Esophagus muscularis mucosa (tissue), 4 donors: ENCODE measurements at regions of chr6 and their contacts with region 1.

Region 1: GRCh38 chr6:133568970-133569889 is 319.7 kb upstream of the TCF21 start:
- DNase-seq: no peak
- H3K4me3 ChIP-seq: peak overlapping the region; percentile 44 to 59 (median 49)
- H3K27ac ChIP-seq: peak overlapping the region; percentile 30 to 72 (median 66)
- H3K4me1 ChIP-seq: peaks cover 0 to 11% (median 3%) of the 10 kb centered on the region in 4 donors
- H3K27me3 ChIP-seq: no peaks in the 10 kb centered on the region
- CTCF ChIP-seq: peak; percentile 96 to 99 (median 97)
- EP300 ChIP-seq: no peak
- POLR2A ChIP-seq: no peak

Region 2: DNA sequence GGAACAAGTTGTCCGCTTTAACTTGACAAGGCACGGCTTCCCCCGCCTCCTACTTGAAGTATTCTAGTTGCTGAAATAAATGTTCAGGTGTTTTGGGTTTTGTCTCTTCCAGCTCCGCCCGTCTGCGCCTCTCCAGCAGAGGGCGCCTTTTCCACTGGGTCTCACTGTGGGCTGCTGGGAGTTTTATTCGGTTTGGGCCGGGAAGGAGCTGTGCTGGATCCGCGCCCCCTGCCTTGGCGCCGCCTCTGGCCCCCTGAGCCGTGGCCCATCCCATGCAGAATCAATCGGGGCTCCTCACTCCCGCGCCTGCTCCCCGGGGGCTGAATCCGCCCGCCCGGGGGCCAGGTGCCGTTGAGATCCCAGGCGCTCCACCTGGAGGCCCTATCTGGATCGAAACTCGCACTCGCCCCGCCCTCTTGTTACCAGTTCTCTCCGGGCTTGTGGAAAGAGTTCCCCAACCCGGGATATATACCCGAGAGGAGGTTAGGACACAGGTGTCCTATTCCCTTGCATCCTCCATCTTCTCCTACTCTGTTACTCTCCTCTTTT is 268.6 kb after region 1 on chr6:
- intact Hi-C with region 1: loop called (anchors 5 kb)
- DNase-seq: no peak
- H3K4me3 ChIP-seq: peak overlapping the region; percentile 50 to 59 (median 52)
- H3K27ac ChIP-seq: peak overlapping the region in 1 of 4 donors; percentile 48
- H3K4me1 ChIP-seq: peaks cover 0 to 10% (median 4%) of the 10 kb centered on the region in 4 donors
- H3K27me3 ChIP-seq: no peaks in the 10 kb centered on the region
- CTCF ChIP-seq: peak; percentile 56 to 81 (median 77)
- EP300 ChIP-seq: no peak
- POLR2A ChIP-seq: no peak

Region 3: DNA sequence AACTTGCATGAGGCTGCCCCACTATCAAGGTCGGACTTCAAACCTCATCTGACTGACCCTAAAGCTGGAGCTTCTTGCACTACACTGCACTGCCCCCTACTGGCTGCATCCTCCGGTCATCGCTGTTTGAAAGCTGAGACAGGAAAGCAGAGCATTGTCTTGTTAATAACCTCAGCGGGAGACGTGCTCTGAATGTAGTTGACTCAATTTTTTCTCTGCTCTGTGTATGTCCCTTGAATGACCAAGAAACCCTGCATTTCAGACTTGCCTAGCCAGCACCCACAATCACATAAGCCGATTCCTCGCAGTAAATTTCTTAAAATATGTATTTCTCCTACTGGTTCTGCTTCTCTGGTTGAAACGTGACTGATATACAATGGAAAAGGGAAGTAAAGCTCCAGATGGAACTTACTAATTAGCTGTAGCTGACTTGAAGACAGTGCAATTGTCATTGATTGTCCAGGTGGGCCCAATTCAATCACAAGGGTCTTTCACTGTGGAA is 347.5 kb after region 1 on chr6:
- intact Hi-C with region 1: loop called (anchors 1 kb)
- DNase-seq: peak; percentile 97
- H3K4me3 ChIP-seq: no peak overlapping the region
- H3K27ac ChIP-seq: no peak overlapping the region
- H3K4me1 ChIP-seq: peaks cover 0 to 25% (median 15%) of the 10 kb centered on the region in 4 donors
- H3K27me3 ChIP-seq: no peaks in the 10 kb centered on the region
- CTCF ChIP-seq: peak; percentile 86 to 87 (median 86)
- EP300 ChIP-seq: no peak
- POLR2A ChIP-seq: no peak

Region 4: GRCh38 chr6:134097114-134097707 is 528.0 kb after region 1 on chr6:
- intact Hi-C with region 1: loop called (anchors 5 kb)
- DNase-seq: peak; percentile 88
- H3K4me3 ChIP-seq: no peak overlapping the region
- H3K27ac ChIP-seq: no peak overlapping the region
- H3K4me1 ChIP-seq: no peaks in the 10 kb centered on the region
- H3K27me3 ChIP-seq: no peaks in the 10 kb centered on the region
- CTCF ChIP-seq: peak; percentile 61 to 69 (median 64)
- EP300 ChIP-seq: no peak
- POLR2A ChIP-seq: no peak